ENCODE measurements at regions of chr12 and their contacts with region 1.

Region 1: GRCh38 chr12:31406345-31406744 is 80.4 kb upstream of the SINHCAF start:
- DNase-seq: no peak
- H3K4me3 ChIP-seq: no peak overlapping the region
- H3K27ac ChIP-seq: no peak overlapping the region
- H3K4me1 ChIP-seq: no peaks in the 10 kb centered on the region
- H3K27me3 ChIP-seq: no peaks in the 10 kb centered on the region
- CTCF ChIP-seq: no peak
- POLR2A ChIP-seq: no peak

Region 2: GRCh38 chr12:31386364-31386777 is 20.0 kb before region 1 on chr12:
- intact Hi-C with region 1: loop called (anchors 1 kb)
- DNase-seq: no peak
- H3K4me3 ChIP-seq: no peak overlapping the region
- H3K27ac ChIP-seq: no peak overlapping the region
- H3K4me1 ChIP-seq: no peaks in the 10 kb centered on the region
- H3K27me3 ChIP-seq: no peaks in the 10 kb centered on the region
- CTCF ChIP-seq: no peak
- POLR2A ChIP-seq: no peak

Region 3: GRCh38 chr12:31431721-31432240 is 25.4 kb after region 1 on chr12:
- intact Hi-C with region 1: no loop called
- DNase-seq: no peak
- H3K4me3 ChIP-seq: no peak overlapping the region
- H3K27ac ChIP-seq: no peak overlapping the region
- H3K4me1 ChIP-seq: no peaks in the 10 kb centered on the region
- H3K27me3 ChIP-seq: no peaks in the 10 kb centered on the region
- CTCF ChIP-seq: no peak
- POLR2A ChIP-seq: no peak

Region 4: GRCh38 chr12:31629756-31630732 is 223.7 kb after region 1 on chr12:
- intact Hi-C with region 1: loop called (anchors 5 kb)
- DNase-seq: no peak
- H3K4me3 ChIP-seq: no peak overlapping the region
- H3K27ac ChIP-seq: no peak overlapping the region
- H3K4me1 ChIP-seq: peaks cover 11% of the 10 kb centered on the region
- H3K27me3 ChIP-seq: no peaks in the 10 kb centered on the region
- CTCF ChIP-seq: no peak
- POLR2A ChIP-seq: no peak

Measured in vagina (tissue), 2 donors.